AG04450 (cell line): ENCODE measurements at regions of chr5 and their contacts with region 1.

Region 1: GRCh38 chr5:54243473-54244080 is 66.8 kb downstream of the ARL15 start:
- DNase-seq: peak; percentile 10
- H3K4me3 ChIP-seq: no peak overlapping the region
- H3K27ac ChIP-seq: no peak overlapping the region
- H3K27me3 ChIP-seq: no peaks in the 10 kb centered on the region
- CTCF ChIP-seq: peak; percentile 70

Region 2: DNA sequence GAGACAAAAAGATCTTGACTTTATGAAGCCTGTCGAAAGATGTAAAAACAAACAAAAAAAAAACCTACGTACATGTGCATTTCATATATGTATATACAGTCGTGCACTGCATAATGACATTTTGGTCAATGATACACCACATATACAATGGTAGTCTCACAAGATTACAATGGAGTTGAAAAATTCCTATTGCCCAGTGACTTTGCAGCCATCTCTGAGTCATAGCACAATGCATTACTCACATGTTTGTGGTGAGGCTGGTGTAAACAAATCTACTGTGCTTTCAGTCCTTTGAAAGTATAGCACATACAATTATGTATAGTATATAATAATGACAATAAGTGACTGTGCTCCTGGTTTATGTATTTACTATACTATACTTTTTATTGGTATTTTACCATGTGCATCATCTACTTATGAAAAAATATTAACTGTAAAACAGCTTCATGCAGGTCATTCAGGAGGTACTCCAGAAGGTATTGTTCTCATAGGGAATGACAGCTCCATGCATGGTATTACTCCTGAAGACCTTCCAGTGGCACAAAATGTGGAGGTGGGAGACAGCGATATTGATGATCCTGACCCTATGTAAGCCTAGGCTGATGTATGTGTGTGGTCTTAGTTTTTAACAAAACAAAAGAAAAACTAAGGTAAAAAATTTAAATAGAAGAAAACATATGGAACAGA is 836.8 kb before region 1 on chr5:
- CTCF ChIA-PET with region 1: no interaction called
- POLR2A ChIA-PET with region 1: no interaction called
- DNase-seq: peak; percentile 86
- H3K4me3 ChIP-seq: no peak overlapping the region
- H3K27ac ChIP-seq: peak overlapping the region; percentile 89
- H3K27me3 ChIP-seq: no peaks in the 10 kb centered on the region
- CTCF ChIP-seq: no peak

Region 3: DNA sequence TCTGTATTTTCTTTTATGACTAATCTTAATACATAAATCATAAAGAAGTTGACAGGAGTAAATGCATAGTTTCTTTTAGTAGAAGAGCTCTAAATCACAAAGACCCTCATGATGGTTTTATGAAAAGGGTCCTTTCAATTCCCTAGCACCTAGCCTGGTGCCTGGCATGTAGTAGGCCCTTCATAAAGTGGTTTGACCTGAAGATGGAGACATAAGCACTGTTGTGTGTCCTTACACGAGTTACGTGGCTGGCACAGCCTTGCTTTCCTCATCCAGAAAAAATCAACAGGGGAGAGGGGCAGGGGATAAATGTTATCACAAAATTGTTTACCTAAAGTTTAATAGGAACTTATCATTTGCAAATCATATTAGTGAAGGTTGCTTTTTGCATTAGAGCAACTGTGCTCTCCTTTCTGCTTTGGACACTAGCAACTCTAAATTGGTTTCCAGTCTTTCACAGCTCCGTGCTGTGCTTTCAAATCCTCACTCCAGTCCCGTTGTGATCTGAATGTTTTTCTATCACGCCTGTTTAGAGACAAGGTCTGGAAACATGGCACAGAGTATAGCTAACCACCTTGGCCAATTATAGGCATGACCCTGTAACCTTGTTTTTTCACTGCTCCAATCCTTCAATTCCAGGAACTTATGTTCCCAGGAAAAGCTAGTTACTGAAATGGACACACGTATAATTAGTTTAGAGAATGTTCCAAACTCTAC is 11.1 kb after region 1 on chr5:
- CTCF ChIA-PET with region 1: interaction called, 20 read pairs
- POLR2A ChIA-PET with region 1: no interaction called
- DNase-seq: no peak
- H3K4me3 ChIP-seq: no peak overlapping the region
- H3K27ac ChIP-seq: no peak overlapping the region
- H3K27me3 ChIP-seq: no peaks in the 10 kb centered on the region
- CTCF ChIP-seq: no peak

Region 4: GRCh38 chr5:54401515-54401914 is 157.9 kb after region 1 on chr5:
- CTCF ChIA-PET with region 1: interaction called, 18 read pairs
- POLR2A ChIA-PET with region 1: no interaction called
- DNase-seq: no peak
- H3K4me3 ChIP-seq: no peak overlapping the region
- H3K27ac ChIP-seq: no peak overlapping the region
- H3K27me3 ChIP-seq: peaks cover 14% of the 10 kb centered on the region
- CTCF ChIP-seq: no peak

Region 5: GRCh38 chr5:54415896-54416601 is 172.5 kb after region 1 on chr5:
- CTCF ChIA-PET with region 1: interaction called, 56 read pairs
- POLR2A ChIA-PET with region 1: no interaction called
- DNase-seq: no peak
- H3K4me3 ChIP-seq: no peak overlapping the region
- H3K27ac ChIP-seq: no peak overlapping the region
- H3K27me3 ChIP-seq: peaks cover 15% of the 10 kb centered on the region
- CTCF ChIP-seq: no peak

Region 6: DNA sequence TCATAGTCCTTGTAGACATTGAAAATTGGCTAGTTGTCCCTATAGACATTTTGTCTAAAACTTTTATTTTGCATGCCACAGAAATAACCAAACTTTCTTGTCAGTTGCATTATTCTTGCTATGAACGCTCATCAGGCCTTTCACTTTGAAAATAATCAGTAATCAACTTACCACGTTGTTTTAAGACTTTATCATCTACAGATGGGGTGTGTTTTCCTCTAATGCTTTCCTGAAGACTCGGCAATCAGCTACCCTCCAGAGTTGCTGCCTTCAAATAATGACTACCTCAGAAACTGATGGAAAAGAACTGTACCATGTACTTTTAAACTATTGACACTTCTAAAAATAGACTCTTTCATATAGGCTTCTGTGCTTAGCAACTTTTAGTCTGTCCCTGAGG is 178.4 kb after region 1 on chr5:
- CTCF ChIA-PET with region 1: interaction called, 56 read pairs
- POLR2A ChIA-PET with region 1: no interaction called
- DNase-seq: no peak
- H3K4me3 ChIP-seq: no peak overlapping the region
- H3K27ac ChIP-seq: no peak overlapping the region
- H3K27me3 ChIP-seq: peaks cover 23% of the 10 kb centered on the region
- CTCF ChIP-seq: no peak

Region 7: GRCh38 chr5:54443270-54443669 is 199.7 kb after region 1 on chr5:
- CTCF ChIA-PET with region 1: interaction called, 14 read pairs
- POLR2A ChIA-PET with region 1: no interaction called
- DNase-seq: peak; percentile 24
- H3K4me3 ChIP-seq: no peak overlapping the region
- H3K27ac ChIP-seq: no peak overlapping the region
- H3K27me3 ChIP-seq: peaks cover 23% of the 10 kb centered on the region
- CTCF ChIP-seq: peak; percentile 70

Region 8: DNA sequence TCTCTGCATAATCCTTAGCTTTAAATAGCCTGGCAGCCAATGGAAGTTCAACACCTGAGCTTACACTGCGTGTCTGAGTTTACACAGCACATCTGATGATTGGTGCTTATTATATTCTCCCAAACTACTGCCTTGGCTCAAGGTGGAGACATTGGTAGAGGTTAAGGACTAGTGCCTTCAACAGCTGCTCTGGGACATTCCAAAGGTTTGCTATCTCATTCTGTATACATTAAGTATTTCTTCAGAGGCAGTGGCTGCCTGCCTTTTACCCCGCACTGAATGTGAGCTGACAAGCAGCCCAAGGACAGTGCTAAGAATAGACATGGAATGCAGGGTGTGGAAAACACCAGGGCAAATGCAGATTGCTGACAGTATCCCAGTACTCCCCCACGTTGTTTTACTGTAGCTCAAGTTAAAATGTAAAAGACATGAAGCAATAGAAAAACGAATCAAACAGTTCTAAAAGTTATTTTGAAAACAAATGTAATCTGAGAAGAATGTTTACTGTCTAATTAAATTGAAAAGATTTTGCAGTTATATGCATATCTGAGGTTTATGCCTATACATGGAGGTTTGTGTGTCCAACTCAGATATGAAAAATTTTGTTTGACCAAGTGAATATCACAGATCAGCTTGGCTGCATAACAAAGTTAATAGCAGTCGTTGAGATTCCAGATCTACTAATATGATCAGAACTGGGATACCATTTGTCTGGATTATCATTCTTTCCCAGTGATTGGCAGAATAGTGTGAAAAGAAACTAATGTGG is 213.7 kb after region 1 on chr5:
- CTCF ChIA-PET with region 1: interaction called, 10 read pairs
- POLR2A ChIA-PET with region 1: no interaction called
- DNase-seq: peak; percentile 72
- H3K4me3 ChIP-seq: no peak overlapping the region
- H3K27ac ChIP-seq: peak overlapping the region; percentile 71
- H3K27me3 ChIP-seq: no peaks in the 10 kb centered on the region
- CTCF ChIP-seq: no peak